ENCODE measurements at regions of chr9 and their contacts with region 1.

Region 1: GRCh38 chr9:98974994-98975712 is 31.4 kb downstream of the COL15A1 start:
- DNase-seq: peak; percentile 70
- H3K4me3 Mint-ChIP-seq: peak overlapping the region; percentile 8
- H3K27ac Mint-ChIP-seq: no peak overlapping the region
- H3K4me1 Mint-ChIP-seq: peaks cover 6% of the 10 kb centered on the region
- H3K27me3 Mint-ChIP-seq: peaks cover 31% of the 10 kb centered on the region

Region 2: GRCh38 chr9:98848450-98849149 is 126.6 kb before region 1 on chr9:
- intact Hi-C with region 1: loop called (anchors 1 kb)
- DNase-seq: peak; percentile 57
- H3K4me3 Mint-ChIP-seq: no peak overlapping the region
- H3K27ac Mint-ChIP-seq: no peak overlapping the region
- H3K4me1 Mint-ChIP-seq: peaks cover 10% of the 10 kb centered on the region
- H3K27me3 Mint-ChIP-seq: no peaks in the 10 kb centered on the region

Region 3: GRCh38 chr9:99000469-99001395 is 25.6 kb after region 1 on chr9:
- intact Hi-C with region 1: loop called (anchors 1 kb)
- DNase-seq: peak; percentile 44
- H3K4me3 Mint-ChIP-seq: no peak overlapping the region
- H3K27ac Mint-ChIP-seq: no peak overlapping the region
- H3K4me1 Mint-ChIP-seq: peaks cover 27% of the 10 kb centered on the region
- H3K27me3 Mint-ChIP-seq: peaks cover 16% of the 10 kb centered on the region

Region 4: GRCh38 chr9:99140685-99141314 is 165.6 kb after region 1 on chr9:
- intact Hi-C with region 1: loop called (anchors 1 kb)
- DNase-seq: no peak
- H3K4me3 Mint-ChIP-seq: no peak overlapping the region
- H3K27ac Mint-ChIP-seq: peak overlapping the region; percentile 9
- H3K4me1 Mint-ChIP-seq: peaks cover 37% of the 10 kb centered on the region
- H3K27me3 Mint-ChIP-seq: no peaks in the 10 kb centered on the region